ENCODE measurements at regions of chr7 and their contacts with region 1.

Region 1: DNA sequence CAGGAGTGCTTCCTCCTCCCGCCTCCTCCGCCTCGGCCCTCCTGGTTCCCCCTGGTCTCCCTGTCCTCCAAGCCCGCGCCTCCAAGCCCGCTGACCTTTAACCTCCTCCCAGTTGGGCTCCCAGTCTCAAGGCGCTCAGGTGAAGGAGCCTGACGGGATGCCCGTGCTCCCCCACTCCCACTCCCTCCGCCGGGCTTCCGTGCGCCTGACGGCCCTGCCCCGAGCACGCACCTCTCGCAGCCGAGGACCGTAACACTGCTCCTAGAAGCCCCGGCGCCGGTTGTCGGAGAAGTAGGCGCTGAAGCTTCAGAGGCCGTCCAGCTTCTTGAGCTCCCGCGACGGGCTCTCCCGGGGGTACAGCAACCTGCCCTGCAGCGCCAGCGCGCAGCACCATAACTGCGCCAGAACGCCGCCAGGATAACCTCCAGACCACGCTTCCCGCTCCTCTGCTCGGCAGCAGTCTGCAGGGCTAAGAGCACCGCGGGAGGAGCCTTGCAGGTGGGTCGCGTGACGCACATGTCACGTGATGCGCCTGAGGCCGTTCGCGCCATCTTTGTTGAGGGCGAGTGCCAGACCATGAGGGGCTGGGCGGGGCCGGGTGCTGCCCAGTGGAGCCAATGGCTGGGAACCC is 71.0 kb upstream of the ZNF479 start:
- DNase-seq: peak in 6 of 10 donors; percentile 20 to 74 (median 40)
- H3K4me3 ChIP-seq: peak overlapping the region in 30 of 59 donors; percentile 4 to 64 (median 32)
- H3K27ac ChIP-seq: peak overlapping the region in 3 of 59 donors; percentile 49 to 62 (median 49)
- H3K27me3 ChIP-seq: peaks cover 0 to 13% (median 0%) of the 10 kb centered on the region in 45 donors
- CTCF ChIP-seq: no peak

Region 2: DNA sequence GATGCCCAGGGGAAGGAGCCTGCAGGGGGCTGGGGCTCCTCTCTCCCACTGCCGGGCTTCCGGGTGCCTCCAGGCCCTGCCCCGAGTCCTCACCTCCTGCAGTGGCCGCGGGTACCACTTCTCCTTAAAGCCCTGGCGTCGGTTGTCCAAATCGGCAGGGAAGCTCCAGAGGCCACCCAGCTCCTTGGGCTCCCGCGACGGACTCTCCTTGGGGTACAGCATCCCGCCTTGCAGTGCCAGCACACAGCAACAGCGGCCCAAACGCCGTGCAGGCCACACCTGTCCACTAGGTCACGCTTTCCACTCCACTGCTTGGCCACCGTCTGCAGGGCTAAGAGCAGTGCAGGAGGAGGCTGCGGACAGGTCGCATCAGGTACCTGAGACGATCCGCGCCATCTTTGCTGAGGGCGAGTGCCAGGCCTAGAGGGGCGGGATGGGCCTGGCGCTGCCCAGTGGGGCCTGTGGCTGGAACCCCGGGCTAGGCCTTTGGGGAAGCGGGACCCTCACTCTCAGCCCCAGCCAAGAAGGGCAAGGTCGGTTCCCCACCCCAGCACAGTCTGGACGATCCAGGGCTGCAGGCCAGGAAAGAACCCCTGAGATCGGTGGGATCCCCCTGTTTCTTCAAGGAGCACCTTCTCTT is 23.4 kb before region 1 on chr7:
- intact Hi-C with region 1: no loop called
- DNase-seq: peak in 2 of 10 donors; percentile 13 to 17
- H3K4me3 ChIP-seq: no peak overlapping the region
- H3K27ac ChIP-seq: no peak overlapping the region
- H3K27me3 ChIP-seq: no peaks in the 10 kb centered on the region
- CTCF ChIP-seq: no peak

Region 3: GRCh38 chr7:57256637-57257375 is 53.5 kb after region 1 on chr7:
- intact Hi-C with region 1: loop called in 1 of 2 experiments (anchors 10 kb)
- DNase-seq: no peak
- H3K4me3 ChIP-seq: no peak overlapping the region
- H3K27ac ChIP-seq: no peak overlapping the region
- H3K27me3 ChIP-seq: no peaks in the 10 kb centered on the region
- CTCF ChIP-seq: no peak